ENCODE measurements at regions of chr5 and their contacts with region 1.

Region 1: DNA sequence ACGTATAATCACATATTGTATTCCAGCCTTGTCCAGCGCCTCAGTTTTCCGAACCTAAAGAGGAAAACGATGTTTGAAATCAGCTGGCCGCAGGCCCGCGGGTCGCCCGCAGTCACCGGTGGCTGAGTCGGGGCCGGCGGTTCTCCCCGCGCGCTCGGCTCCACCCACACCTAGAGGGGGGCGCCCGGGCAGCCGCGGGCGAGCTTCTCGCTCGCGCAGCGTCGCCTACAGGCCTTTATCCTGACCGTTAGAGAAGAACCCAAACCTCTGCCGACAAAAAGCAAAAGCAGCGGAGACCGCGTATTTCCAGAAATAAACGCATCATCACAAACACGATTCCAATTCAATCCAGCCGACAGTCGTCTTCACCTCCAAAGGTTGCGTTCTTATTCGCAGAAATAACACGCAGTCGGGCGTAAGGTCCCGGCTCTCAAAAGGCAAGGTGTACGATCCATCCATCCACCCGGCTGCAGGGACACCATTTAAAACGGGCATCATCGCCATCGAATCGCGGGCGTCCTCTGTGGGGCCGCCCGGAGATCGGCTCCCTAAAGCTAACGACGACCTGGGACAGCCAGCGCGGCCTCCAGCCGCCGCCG is 680 bp upstream of the NIPBL start:
- DNase-seq: peak; percentile 83
- H3K4me3 Mint-ChIP-seq: peak overlapping the region; percentile 88
- H3K27ac Mint-ChIP-seq: peak overlapping the region; percentile 96
- H3K4me1 Mint-ChIP-seq: peaks cover 35% of the 10 kb centered on the region
- H3K27me3 Mint-ChIP-seq: no peaks in the 10 kb centered on the region

Region 2: DNA sequence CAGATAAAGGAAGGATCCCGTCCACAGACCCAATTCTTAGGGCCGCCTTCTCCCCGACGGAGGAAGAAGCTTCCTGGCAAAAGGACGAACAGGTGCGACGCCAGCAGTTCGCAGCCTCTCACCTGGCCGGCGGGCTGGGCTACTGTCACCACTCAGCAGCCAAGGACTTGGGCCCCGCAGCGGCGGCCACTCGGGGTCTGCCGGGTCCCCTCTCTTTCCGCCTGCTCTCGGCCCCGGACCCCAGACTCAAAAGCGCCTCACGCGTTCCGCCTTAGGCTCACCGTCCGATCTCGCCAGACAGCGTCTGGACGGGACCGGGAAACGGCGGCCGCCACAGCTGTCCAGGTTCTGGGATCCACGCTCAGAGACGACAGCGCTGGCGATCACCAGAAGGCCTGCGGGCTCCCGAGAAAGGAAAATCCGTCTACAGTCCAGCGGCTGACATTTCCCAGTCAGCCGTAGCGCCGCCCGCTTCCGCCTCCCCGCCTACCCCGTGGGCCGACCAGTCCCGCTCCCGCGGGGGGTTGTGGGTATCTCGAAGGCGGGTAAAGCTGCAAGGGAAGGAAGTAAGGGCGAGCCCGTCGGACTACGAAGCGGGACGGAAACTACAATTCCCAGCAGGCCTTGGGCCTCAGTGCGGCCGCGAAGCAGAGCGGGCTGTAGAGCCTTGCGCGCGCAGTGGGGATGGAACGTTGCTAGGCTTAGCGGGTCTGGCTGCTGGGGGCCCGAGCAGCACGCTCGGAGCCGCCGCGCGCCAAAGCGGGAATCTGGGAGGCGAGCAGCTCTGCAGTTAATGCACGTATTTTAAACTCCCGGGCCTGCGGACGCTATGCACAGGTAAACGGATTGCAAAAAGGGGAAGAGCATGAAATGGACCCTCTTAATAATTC is 724.2 kb before region 1 on chr5 and contains the starts of genes LMBRD2 and SKP2:
- CTCF ChIA-PET with region 1: no interaction called
- POLR2A ChIA-PET with region 1: interaction called, 3 read pairs
- intact Hi-C with region 1: loop called (anchors 2 kb)
- DNase-seq: peak; percentile 98
- H3K4me3 Mint-ChIP-seq: peak within 1 kb of the TSS; percentile 95
- H3K27ac Mint-ChIP-seq: peak within 1 kb of the TSS; percentile 84
- H3K4me1 Mint-ChIP-seq: peaks cover 62% of the 10 kb centered on the region
- H3K27me3 Mint-ChIP-seq: no peaks in the 10 kb centered on the region
- total RNA-seq, gene LMBRD2: 8.1 to 10.0 TPM
- total RNA-seq, gene SKP2: 33.1 to 34.7 TPM

Region 3: DNA sequence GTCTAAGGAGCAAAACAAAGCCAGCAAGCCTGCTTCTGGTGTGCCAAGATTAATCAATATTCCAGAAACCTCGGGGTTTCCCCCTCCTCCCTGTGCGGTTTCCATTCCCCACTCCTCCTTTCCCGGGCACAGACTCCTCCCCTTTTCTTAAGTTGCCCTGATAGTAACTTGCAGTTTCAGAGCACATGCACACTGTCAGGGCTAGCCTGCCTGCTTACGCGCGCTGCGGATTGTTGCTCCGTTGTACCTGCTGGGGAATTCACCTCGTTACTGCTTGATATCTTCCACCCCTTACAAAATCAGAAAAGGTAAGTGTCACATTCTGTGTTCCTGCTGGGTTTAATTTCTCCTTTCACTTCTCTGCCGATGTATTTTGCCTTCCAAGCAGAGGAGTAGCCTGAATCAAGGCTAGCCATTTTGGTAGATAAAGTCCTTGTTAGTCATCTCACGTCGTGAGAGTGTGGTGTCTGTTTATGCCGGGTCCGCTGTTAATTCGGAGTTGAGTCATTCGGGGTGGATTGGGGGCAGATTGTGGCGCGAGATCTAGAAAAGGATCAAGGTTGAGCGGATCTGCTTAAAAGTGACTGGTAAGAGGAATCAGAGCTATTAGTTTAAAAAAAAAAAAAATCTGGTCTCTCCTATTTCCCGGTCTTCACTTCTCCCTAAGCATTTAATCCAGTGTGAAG is 269.3 kb before region 1 on chr5 and contains the start of gene SLC1A3:
- CTCF ChIA-PET with region 1: no interaction called
- POLR2A ChIA-PET with region 1: no interaction called
- intact Hi-C with region 1: loop called (anchors 5 kb)
- DNase-seq: peak; percentile 76
- H3K4me3 Mint-ChIP-seq: peak within 1 kb of the TSS; percentile 72
- H3K27ac Mint-ChIP-seq: peak within 1 kb of the TSS; percentile 54
- H3K4me1 Mint-ChIP-seq: peaks cover 18% of the 10 kb centered on the region
- H3K27me3 Mint-ChIP-seq: peaks cover 54% of the 10 kb centered on the region
- total RNA-seq, gene SLC1A3: 0.29 TPM in 1 of 2 experiments, not detected in the other

Region 4: DNA sequence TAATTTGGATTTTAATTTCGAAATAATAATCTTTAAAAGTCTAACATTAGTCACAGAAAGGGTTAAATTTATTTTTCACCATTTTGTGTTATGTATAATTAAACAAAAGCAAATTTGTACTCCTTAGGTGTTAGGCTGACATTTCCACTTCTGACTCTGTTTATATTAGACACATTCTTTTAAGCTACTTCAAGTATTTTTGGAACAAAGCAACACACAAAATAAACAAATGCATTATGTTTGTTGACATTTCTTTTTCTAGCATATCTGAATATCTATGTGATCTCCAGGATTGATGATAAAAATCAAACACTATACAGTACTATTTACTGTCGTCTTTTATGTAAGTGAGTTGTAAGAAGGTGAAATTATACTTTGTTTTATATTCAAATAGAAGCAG is 43.6 kb before region 1 on chr5:
- CTCF ChIA-PET with region 1: no interaction called
- POLR2A ChIA-PET with region 1: no interaction called
- intact Hi-C with region 1: no loop called
- DNase-seq: no peak
- H3K4me3 Mint-ChIP-seq: no peak overlapping the region
- H3K27ac Mint-ChIP-seq: no peak overlapping the region
- H3K4me1 Mint-ChIP-seq: no peaks in the 10 kb centered on the region
- H3K27me3 Mint-ChIP-seq: no peaks in the 10 kb centered on the region

Region 5: DNA sequence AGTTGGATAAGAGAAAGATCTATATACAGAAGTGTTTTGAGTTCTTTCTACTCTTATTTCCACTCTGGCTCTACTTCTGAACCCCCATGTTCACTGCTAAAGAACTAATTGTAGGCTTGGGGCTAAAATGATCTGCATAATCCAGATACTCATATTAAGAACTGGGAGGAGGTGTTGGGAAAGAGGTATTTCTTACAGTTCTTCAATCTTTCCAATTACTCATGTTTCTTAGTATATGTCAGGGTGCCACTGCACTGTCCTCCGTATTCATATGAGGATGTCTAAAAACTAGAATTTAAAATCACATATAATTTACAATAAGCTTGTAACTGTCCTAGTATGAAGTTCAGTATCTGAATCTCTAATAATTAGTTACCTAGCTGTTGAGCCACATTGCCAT is 13.4 kb after region 1 on chr5:
- CTCF ChIA-PET with region 1: interaction called, 6 read pairs
- POLR2A ChIA-PET with region 1: interaction called, 4 read pairs
- intact Hi-C with region 1: loop called (anchors 1 kb)
- DNase-seq: no peak
- H3K4me3 Mint-ChIP-seq: no peak overlapping the region
- H3K27ac Mint-ChIP-seq: peak overlapping the region; percentile 59
- H3K4me1 Mint-ChIP-seq: peaks cover 65% of the 10 kb centered on the region
- H3K27me3 Mint-ChIP-seq: no peaks in the 10 kb centered on the region

Region 6: GRCh38 chr5:36944607-36945225 is 68.8 kb after region 1 on chr5:
- CTCF ChIA-PET with region 1: interaction called, 14 read pairs
- POLR2A ChIA-PET with region 1: interaction called, 3 read pairs
- intact Hi-C with region 1: loop called (anchors 2 kb)
- DNase-seq: no peak
- H3K4me3 Mint-ChIP-seq: no peak overlapping the region
- H3K27ac Mint-ChIP-seq: no peak overlapping the region
- H3K4me1 Mint-ChIP-seq: peaks cover 40% of the 10 kb centered on the region
- H3K27me3 Mint-ChIP-seq: no peaks in the 10 kb centered on the region

Region 7: DNA sequence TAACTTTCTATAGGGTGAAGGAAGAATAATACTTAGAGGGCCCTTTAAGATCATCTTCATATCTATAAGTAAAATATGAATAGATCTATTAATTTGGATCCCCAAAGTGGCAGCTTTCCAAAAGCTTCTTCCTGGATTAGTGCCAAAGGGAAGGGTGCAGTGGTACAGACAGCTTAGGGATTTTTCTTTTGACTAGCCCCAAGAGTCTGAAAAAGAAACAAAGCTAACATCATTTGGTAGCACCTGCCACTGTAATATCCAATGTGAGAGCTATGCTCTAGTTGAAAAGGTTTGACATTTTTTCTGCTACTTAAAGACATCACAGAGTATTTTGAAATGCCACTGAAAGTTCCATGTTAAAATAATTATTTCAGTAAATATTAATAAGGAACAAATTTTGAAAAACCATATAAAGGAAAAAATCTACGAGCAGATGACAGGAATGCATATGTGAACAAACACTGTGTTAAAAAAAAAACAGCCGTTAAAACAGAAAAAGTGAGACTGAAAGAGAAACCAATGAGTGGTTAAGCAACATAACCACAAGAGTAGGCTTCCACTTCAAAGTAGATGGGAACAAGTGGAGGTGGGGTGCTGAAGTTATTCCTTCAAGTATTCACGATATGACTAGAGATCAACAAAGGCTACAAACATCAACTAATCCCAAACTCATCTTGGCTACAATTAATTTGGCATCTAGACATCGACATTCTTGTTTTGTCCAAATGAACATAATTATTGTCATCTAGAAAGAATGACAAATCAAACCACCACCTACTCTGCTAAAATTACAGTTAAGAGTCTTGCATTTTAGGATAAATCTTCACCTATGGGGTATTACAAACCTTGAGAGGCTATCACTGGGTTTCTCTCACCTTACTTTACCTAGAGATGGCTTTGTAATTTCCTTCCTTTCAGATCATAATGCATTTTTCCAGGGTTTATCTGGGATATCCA is 235.8 kb after region 1 on chr5:
- CTCF ChIA-PET with region 1: no interaction called
- POLR2A ChIA-PET with region 1: no interaction called
- intact Hi-C with region 1: loop called (anchors 5 kb)
- DNase-seq: no peak
- H3K4me3 Mint-ChIP-seq: peak overlapping the region; percentile 35
- H3K27ac Mint-ChIP-seq: peak overlapping the region; percentile 28
- H3K4me1 Mint-ChIP-seq: peaks cover 26% of the 10 kb centered on the region
- H3K27me3 Mint-ChIP-seq: peaks cover 5% of the 10 kb centered on the region

Region 8: GRCh38 chr5:37722236-37723146 is 846.6 kb after region 1 on chr5:
- CTCF ChIA-PET with region 1: no interaction called
- POLR2A ChIA-PET with region 1: no interaction called
- intact Hi-C with region 1: loop called (anchors 5 kb)
- DNase-seq: peak; percentile 62
- H3K4me3 Mint-ChIP-seq: peak overlapping the region; percentile 6
- H3K27ac Mint-ChIP-seq: peak overlapping the region; percentile 67
- H3K4me1 Mint-ChIP-seq: peaks cover 34% of the 10 kb centered on the region
- H3K27me3 Mint-ChIP-seq: peaks cover 6% of the 10 kb centered on the region

Measured in activated CD4-positive, alpha-beta memory T cell treated with anti-CD3 and anti-CD28 coated beads for 36 hours (primary cell).